ENCODE measurements at regions of chr1 and their contacts with region 1.

Region 1: DNA sequence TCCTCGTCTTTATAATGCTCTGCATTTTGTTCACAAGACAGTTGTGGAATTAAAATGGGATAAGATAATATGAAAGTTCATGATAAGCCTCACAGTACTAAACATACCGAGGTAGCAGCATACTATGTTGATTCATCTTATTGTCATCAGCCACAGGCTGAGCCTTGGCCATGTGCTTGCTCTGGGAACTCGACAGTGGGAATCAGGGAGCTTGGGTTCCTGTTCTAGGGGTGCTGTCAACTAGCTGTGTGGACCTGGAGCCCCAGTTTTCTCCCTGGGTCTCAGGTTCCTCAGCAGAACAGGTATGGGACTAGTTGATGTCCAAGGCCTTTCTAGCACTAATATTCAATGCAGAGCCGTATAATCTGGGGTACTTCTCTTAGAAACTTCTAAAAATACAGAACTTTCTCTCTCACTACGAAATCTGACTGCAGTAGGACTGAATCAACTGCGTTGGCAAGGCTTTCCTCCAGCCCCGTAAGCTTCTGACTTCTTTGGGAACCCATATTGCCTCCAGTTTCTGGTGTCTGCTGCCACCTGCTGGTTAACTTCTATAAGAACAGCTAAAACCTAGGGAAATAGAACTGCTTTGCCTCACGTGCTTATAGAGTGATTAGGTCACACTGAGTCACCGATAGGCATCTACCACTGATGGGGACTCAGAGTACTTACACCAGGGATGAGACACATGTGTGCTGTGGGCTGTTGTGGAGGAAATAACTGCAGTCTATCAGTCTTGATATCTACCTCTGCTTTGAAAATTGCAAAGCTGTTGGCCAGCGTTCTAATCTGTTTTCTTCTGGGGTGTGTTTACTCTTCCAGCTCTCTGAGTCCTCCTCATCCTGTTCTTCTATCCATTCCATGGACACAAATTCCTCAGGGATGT is 110.9 kb downstream of the RGL1 start:
- DNase-seq: peak; percentile 52 to 65
- ATAC-seq: peak; percentile 89

Region 2: DNA sequence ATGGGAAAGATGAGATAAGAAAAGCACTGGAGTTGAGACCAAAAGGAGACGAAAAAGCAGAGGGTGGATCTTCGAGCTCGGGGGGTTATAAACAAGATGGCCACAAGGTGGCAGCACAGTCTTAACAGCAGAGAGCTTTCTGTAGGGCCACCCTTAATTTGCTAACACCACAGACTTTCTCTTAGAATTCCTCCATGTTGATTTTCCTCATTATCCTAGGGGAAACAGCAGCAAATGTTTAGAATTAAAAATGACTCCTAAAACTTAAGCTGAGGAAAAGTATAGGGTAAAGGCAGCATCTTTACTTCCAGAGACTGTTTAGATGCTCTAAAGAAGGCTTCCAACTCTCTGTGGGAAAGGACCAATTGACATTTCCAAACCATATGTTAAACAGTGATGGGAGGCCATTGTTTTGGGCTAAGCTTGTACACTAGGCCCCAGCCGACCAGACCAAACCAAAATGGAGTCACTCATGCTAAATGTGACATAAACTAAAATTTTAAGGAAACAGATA is 260.2 kb before region 1 on chr1:
- intact Hi-C with region 1: loop called (anchors 5 to 10 kb)
- DNase-seq: peak; percentile 59 to 88
- ATAC-seq: peak; percentile 46

Region 3: GRCh38 chr1:183670178-183670577 is 245.7 kb before region 1 on chr1:
- intact Hi-C with region 1: no loop called
- DNase-seq: no peak
- ATAC-seq: no peak

Region 4: GRCh38 chr1:183804881-183805841 is 110.7 kb before region 1 on chr1 and contains the start of gene RGL1:
- intact Hi-C with region 1: loop called in 1 of 2 experiments (anchors 10 kb)
- DNase-seq: peak; percentile 50 to 64
- ATAC-seq: peak; percentile 64
- total RNA-seq, gene RGL1: 7.3 to 12.7 TPM

Region 5: DNA sequence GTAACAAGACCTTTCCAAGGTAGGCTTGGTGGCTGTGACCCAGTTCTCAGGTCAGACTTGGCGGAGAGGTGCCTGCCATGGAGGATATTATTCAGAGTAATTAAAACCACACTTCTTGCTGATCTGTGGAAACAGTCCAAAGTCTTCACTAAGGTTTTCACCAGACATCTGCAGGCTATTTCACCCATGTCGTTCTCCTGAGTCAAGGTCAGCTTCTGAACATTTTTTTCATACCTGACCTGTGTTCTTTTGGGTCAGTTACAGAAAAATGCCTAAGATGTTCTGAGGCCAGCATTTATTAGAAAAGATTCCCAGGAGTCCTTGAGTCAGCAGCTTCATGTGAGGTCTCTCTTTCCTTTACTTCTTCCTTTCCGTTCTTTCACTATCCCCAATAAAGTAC is 56.0 kb before region 1 on chr1:
- intact Hi-C with region 1: no loop called
- DNase-seq: no peak
- ATAC-seq: no peak

Region 6: GRCh38 chr1:184069675-184070074 is 153.8 kb after region 1 on chr1:
- intact Hi-C with region 1: no loop called
- DNase-seq: no peak
- ATAC-seq: no peak